Panc1 (cell line): ENCODE measurements at regions of chr17 and their contacts with region 1.

Region 1: GRCh38 chr17:50547035-50547735 is at the start of gene SPATA20:
- DNase-seq: peak; percentile 61
- ATAC-seq: peak; percentile 86
- H3K4me3 ChIP-seq: peak within 1 kb of the TSS; percentile 52 to 73
- H3K27ac ChIP-seq: peak within 1 kb of the TSS; percentile 94
- H3K4me1 ChIP-seq: peaks cover 26% of the 10 kb centered on the region
- H3K27me3 ChIP-seq: no peaks in the 10 kb centered on the region
- CTCF ChIP-seq: peak; percentile 100
- total RNA-seq, gene SPATA20: 82.2 TPM

Region 2: DNA sequence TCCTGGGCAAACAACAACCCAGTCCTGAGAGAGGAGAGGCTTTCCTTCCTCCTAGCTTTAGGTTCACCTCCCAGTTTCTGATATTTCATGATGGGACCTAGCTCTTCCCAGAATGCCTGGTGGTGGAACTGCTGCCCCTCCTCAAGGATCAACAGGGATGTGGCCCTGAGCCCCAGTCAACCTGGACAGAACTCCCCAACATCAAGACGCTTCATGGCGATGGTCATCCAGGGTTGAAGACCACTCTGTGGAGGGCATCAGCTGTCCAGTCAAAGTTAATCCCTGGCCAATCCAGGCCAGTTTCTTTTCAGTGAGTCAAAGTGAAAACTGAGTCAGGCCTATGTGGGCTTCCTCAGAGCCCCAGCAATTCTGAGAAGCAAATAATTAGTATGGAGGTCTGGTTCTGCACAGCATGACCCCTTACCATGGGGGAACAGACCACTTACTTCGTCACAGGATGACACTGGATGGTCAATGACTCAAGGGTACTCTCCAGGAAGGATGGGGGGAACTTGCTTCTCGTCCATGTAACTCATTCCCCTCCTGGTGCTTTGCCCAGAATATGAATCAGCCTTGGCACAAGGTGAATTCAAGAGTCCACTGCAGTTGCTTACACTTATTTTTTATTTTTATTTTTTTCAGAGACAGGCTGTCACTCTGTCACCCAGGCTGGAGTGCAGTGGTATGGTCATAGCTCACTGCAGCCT is 215.9 kb before region 1 on chr17:
- CTCF ChIA-PET with region 1: no interaction called
- POLR2A ChIA-PET with region 1: interaction called, 13 read pairs
- in situ Hi-C with region 1: no loop called
- intact Hi-C with region 1: no loop called
- DNase-seq: no peak
- ATAC-seq: no peak
- H3K4me3 ChIP-seq: no peak overlapping the region
- H3K27ac ChIP-seq: no peak overlapping the region
- H3K4me1 ChIP-seq: no peaks in the 10 kb centered on the region
- H3K27me3 ChIP-seq: no peaks in the 10 kb centered on the region; the same call in 1 of the 2 replicates
- CTCF ChIP-seq: no peak

Region 3: GRCh38 chr17:50560185-50560824 is 13.1 kb after region 1 on chr17 and contains the start of gene CACNA1G:
- CTCF ChIA-PET with region 1: interaction called, 17 read pairs
- POLR2A ChIA-PET with region 1: interaction called, 4 read pairs
- in situ Hi-C with region 1: no loop called
- intact Hi-C with region 1: no loop called
- DNase-seq: no peak
- ATAC-seq: peak; percentile 90
- H3K4me3 ChIP-seq: peak within 1 kb of the TSS; percentile 76 to 90
- H3K27ac ChIP-seq: peak within 1 kb of the TSS; percentile 81
- H3K4me1 ChIP-seq: peaks cover 27% of the 10 kb centered on the region
- H3K27me3 ChIP-seq: no peaks in the 10 kb centered on the region; the same call in 1 of the 2 replicates
- CTCF ChIP-seq: no peak
- total RNA-seq, gene CACNA1G: 10.0 TPM

Region 4: DNA sequence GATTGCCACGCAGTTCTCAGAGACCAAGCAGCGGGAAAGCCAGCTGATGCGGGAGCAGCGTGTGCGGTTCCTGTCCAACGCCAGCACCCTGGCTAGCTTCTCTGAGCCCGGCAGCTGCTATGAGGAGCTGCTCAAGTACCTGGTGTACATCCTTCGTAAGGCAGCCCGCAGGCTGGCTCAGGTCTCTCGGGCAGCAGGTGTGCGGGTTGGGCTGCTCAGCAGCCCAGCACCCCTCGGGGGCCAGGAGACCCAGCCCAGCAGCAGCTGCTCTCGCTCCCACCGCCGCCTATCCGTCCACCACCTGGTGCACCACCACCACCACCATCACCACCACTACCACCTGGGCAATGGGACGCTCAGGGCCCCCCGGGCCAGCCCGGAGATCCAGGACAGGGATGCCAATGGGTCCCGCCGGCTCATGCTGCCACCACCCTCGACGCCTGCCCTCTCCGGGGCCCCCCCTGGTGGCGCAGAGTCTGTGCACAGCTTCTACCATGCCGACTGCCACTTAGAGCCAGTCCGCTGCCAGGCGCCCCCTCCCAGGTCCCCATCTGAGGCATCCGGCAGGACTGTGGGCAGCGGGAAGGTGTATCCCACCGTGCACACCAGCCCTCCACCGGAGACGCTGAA is 28.5 kb after region 1 on chr17:
- CTCF ChIA-PET with region 1: no interaction called
- POLR2A ChIA-PET with region 1: no interaction called
- in situ Hi-C with region 1: no loop called
- intact Hi-C with region 1: no loop called
- DNase-seq: no peak
- ATAC-seq: no peak
- H3K4me3 ChIP-seq: no peak overlapping the region
- H3K27ac ChIP-seq: no peak overlapping the region
- H3K4me1 ChIP-seq: no peaks in the 10 kb centered on the region
- H3K27me3 ChIP-seq: no peaks in the 10 kb centered on the region
- CTCF ChIP-seq: no peak

Region 5: GRCh38 chr17:50620237-50620636 is 73.1 kb after region 1 on chr17:
- CTCF ChIA-PET with region 1: interaction called, 34 read pairs
- POLR2A ChIA-PET with region 1: no interaction called
- in situ Hi-C with region 1: no loop called
- intact Hi-C with region 1: no loop called
- DNase-seq: no peak
- ATAC-seq: no peak
- H3K4me3 ChIP-seq: no peak overlapping the region
- H3K27ac ChIP-seq: no peak overlapping the region
- H3K4me1 ChIP-seq: peaks cover 9% of the 10 kb centered on the region
- H3K27me3 ChIP-seq: no peaks in the 10 kb centered on the region
- CTCF ChIP-seq: no peak

Region 6: GRCh38 chr17:50626037-50626574 is 78.9 kb after region 1 on chr17:
- CTCF ChIA-PET with region 1: interaction called, 34 read pairs
- POLR2A ChIA-PET with region 1: no interaction called
- in situ Hi-C with region 1: no loop called
- intact Hi-C with region 1: loop called (anchors 2 kb)
- DNase-seq: no peak
- ATAC-seq: peak; percentile 82
- H3K4me3 ChIP-seq: no peak overlapping the region
- H3K27ac ChIP-seq: peak overlapping the region; percentile 55
- H3K4me1 ChIP-seq: peaks cover 66% of the 10 kb centered on the region
- H3K27me3 ChIP-seq: no peaks in the 10 kb centered on the region
- CTCF ChIP-seq: peak; percentile 92

Region 7: DNA sequence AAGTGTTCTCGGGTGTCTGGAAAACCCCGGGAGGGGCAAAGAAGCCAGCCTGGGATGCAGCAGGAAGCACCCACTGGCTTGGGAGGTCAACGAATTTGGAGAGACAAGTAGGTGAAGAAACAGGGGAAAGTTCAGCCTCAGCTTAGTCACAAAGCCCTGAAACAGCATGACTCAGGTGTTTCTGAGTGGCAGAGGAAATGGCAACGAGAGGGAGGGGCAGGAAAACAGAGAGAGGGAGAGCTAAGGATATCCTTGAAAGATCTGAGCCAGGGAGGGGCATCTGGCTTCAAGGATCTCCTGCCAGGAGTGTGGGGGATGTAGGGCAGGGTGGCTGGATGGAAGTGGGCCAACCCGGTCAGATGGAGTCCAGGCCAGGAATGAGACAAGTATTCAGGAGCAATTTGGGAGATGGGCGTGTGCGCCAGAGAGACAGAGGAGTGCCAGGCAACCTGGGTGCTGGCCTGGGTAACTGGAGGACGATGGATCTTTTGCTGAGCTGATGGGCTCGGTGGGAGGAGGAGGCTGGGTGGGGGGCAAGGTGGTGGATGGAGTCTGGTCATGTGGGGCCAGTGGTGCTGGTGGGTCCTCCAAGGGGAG is 114.7 kb after region 1 on chr17:
- CTCF ChIA-PET with region 1: no interaction called
- POLR2A ChIA-PET with region 1: no interaction called
- in situ Hi-C with region 1: no loop called
- intact Hi-C with region 1: no loop called
- DNase-seq: peak; percentile 79
- ATAC-seq: peak; percentile 78
- H3K4me3 ChIP-seq: no peak overlapping the region
- H3K27ac ChIP-seq: peak overlapping the region; percentile 85
- H3K4me1 ChIP-seq: peaks cover 59% of the 10 kb centered on the region
- H3K27me3 ChIP-seq: no peaks in the 10 kb centered on the region
- CTCF ChIP-seq: no peak

Region 8: DNA sequence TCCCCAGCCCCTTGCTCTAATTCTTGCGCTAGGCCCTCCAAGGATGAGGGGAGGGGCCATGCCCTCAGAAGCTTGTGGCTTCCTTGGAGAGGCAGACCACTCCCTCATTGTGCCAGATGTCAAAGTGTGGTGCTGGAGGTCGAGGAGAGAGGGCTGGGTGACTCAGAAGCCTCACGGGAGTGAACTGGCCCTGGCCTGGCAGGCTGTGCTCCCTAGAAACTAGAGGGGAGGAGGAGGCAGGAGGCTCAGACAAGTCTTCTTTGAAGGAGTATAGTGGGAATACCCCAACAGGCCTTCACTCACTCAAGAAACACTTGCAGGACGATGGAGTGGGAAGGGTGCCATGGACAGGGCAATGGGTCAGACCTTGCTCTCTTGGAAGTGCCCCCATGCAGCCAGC is 142.1 kb after region 1 on chr17:
- CTCF ChIA-PET with region 1: interaction called, 5 read pairs
- POLR2A ChIA-PET with region 1: no interaction called
- in situ Hi-C with region 1: no loop called
- intact Hi-C with region 1: loop called (anchors 2 kb)
- DNase-seq: no peak
- ATAC-seq: peak; percentile 16; the same call in 1 of the 2 replicates
- H3K4me3 ChIP-seq: no peak overlapping the region
- H3K27ac ChIP-seq: peak overlapping the region; percentile 29
- H3K4me1 ChIP-seq: peaks cover 83% of the 10 kb centered on the region
- H3K27me3 ChIP-seq: no peaks in the 10 kb centered on the region
- CTCF ChIP-seq: no peak

Region 9: DNA sequence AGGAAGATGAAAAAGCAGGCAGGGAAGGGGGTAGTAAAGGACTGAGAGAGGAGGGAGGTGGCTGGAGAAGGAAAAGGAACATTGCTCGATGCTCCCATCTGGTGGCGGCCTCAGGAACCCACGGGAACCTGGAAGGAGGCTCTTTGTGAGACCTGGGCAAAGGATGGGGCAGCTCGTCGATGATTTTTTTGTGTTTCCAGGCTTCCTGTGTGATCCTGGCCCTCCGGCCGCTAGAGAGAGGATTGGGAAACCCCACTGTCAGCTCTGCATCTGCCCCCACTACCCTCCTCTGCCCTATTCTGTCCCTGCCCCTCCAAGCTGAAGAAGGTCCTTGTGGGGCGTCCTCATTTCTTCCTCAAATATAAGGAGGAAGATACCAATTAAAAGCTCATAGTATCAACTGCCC is 294.8 kb after region 1 on chr17:
- CTCF ChIA-PET with region 1: no interaction called
- POLR2A ChIA-PET with region 1: interaction called, 5 read pairs
- in situ Hi-C with region 1: no loop called
- intact Hi-C with region 1: loop called (anchors 5 kb)
- DNase-seq: no peak
- ATAC-seq: peak; percentile 92
- H3K4me3 ChIP-seq: no peak overlapping the region
- H3K27ac ChIP-seq: no peak overlapping the region
- H3K4me1 ChIP-seq: no peaks in the 10 kb centered on the region
- H3K27me3 ChIP-seq: no peaks in the 10 kb centered on the region
- CTCF ChIP-seq: peak; percentile 89